SK-N-SH (cell line): ENCODE measurements at regions of chr1 and their contacts with region 1.

Region 1: GRCh38 chr1:245156081-245156735 is 1.4 kb downstream of the KIF26B start:
- DNase-seq: peak; percentile 93
- H3K4me3 ChIP-seq: peak overlapping the region; percentile 84 to 99
- H3K27ac ChIP-seq: peak overlapping the region; percentile 68 to 98; a peak in 3 of 4 replicates
- H3K4me1 ChIP-seq: peaks cover 0 to 41% of the 10 kb centered on the region in 2 experiments; a peak in 2 of 4 replicates
- H3K27me3 ChIP-seq: no peaks in the 10 kb centered on the region
- CTCF ChIP-seq: peak; percentile 63
- EP300 ChIP-seq: peak in 1 of 2 experiments; percentile 10; a peak in 1 of 4 replicates
- RAD21 ChIP-seq: peak; percentile 74

Region 2: DNA sequence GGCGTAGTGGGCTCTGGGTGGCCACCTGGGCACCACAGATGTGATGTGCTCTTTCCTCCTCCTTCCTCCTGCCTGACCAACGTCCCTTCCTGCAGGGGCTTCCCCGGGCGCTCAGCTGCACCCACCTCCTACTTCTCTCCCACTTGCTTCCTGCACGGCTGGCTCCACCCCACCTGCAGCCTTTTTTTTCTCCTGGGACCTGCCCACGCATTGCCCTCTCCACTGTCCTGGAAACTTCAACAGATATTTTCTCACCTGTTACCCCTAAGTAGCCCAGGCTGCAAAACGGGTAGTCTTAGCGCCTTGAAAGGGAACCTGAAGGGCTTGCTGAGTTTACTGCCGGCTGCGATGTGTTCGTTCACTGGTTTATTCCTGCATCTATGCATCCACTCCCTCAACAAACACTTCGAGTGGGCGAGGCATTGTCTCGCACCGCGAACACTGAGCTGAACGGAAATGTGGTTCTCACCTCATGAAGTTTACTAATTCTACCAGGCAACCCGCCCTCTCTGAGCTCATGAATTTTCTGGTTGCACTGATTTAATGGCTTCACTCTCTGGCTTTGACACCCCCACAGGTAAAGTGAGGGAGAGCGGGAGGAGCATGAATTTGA is 1081.5 kb before region 1 on chr1:
- CTCF ChIA-PET with region 1: no interaction called
- POLR2A ChIA-PET with region 1: no interaction called
- DNase-seq: no peak
- H3K4me3 ChIP-seq: no peak overlapping the region
- H3K27ac ChIP-seq: no peak overlapping the region
- H3K4me1 ChIP-seq: no peaks in the 10 kb centered on the region; a peak in 1 of 4 replicates
- H3K27me3 ChIP-seq: no peaks in the 10 kb centered on the region
- CTCF ChIP-seq: no peak
- EP300 ChIP-seq: no peak
- RAD21 ChIP-seq: no peak

Region 3: GRCh38 chr1:245166471-245166885 is 10.3 kb after region 1 on chr1:
- CTCF ChIA-PET with region 1: interaction called, 30 read pairs
- POLR2A ChIA-PET with region 1: interaction called, 10 read pairs
- DNase-seq: peak; percentile 78
- H3K4me3 ChIP-seq: peak overlapping the region; percentile 23 to 27
- H3K27ac ChIP-seq: peak overlapping the region; percentile 10 to 87
- H3K4me1 ChIP-seq: peaks cover 0 to 48% of the 10 kb centered on the region in 2 experiments; a peak in 2 of 4 replicates
- H3K27me3 ChIP-seq: no peaks in the 10 kb centered on the region
- CTCF ChIP-seq: 0 out of 2 replicates have a peak, but pooled peaks have one; percentile 9
- EP300 ChIP-seq: peak in 1 of 2 experiments; percentile 63; a peak in 1 of 4 replicates
- RAD21 ChIP-seq: no peak; the same call in 1 of the 2 replicates

Region 4: GRCh38 chr1:245337829-245338484 is 181.7 kb after region 1 on chr1:
- CTCF ChIA-PET with region 1: interaction called, 13 read pairs
- POLR2A ChIA-PET with region 1: interaction called, 3 read pairs
- DNase-seq: peak; percentile 64
- H3K4me3 ChIP-seq: no peak overlapping the region
- H3K27ac ChIP-seq: peak overlapping the region; percentile 9 to 92; a peak in 2 of 4 replicates
- H3K4me1 ChIP-seq: peaks cover 0 to 38% of the 10 kb centered on the region in 2 experiments; a peak in 2 of 4 replicates
- H3K27me3 ChIP-seq: no peaks in the 10 kb centered on the region
- CTCF ChIP-seq: no peak
- EP300 ChIP-seq: peak in 1 of 2 experiments; percentile 89; a peak in 2 of 4 replicates
- RAD21 ChIP-seq: no peak

Region 5: GRCh38 chr1:245512980-245513578 is 356.9 kb after region 1 on chr1:
- CTCF ChIA-PET with region 1: interaction called, 50 read pairs
- POLR2A ChIA-PET with region 1: interaction called, 25 read pairs
- DNase-seq: peak; percentile 78
- H3K4me3 ChIP-seq: peak overlapping the region; percentile 39 to 55
- H3K27ac ChIP-seq: peak overlapping the region; percentile 41 to 92; a peak in 3 of 4 replicates
- H3K4me1 ChIP-seq: peaks cover 0 to 51% of the 10 kb centered on the region in 2 experiments; a peak in 2 of 4 replicates
- H3K27me3 ChIP-seq: no peaks in the 10 kb centered on the region
- CTCF ChIP-seq: peak; percentile 45
- EP300 ChIP-seq: no peak
- RAD21 ChIP-seq: peak; percentile 26

Region 6: DNA sequence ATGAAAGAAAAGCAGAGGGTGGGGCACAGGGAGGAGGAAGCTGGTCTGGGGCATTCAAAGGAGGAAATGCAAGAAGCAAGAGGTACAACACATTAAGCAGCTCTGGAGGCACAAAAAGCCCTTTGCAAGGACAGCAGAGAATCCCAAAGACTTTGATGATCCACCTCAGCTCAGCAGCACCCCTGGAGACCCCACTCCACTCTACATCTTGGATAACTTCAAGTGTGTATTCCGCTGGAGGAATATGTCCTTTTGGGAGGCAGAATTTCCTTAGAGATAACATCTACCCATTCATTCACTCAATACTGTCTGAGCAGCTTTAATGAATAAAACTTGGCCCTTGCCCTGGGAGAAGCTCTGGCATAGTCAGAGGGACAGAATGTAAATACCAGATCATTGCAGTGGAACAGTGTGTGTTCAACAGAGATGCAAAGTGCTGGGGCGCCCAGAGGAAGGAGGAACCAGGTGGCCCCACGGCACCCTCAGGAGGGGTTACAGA is 598.3 kb after region 1 on chr1:
- CTCF ChIA-PET with region 1: interaction called, 13 read pairs
- POLR2A ChIA-PET with region 1: interaction called, 3 read pairs
- DNase-seq: no peak
- H3K4me3 ChIP-seq: no peak overlapping the region
- H3K27ac ChIP-seq: peak overlapping the region; percentile 25 to 97; a peak in 3 of 4 replicates
- H3K4me1 ChIP-seq: peaks cover 7 to 43% of the 10 kb centered on the region in 2 experiments; a peak in 3 of 4 replicates
- H3K27me3 ChIP-seq: no peaks in the 10 kb centered on the region
- CTCF ChIP-seq: no peak
- EP300 ChIP-seq: peak in 1 of 2 experiments; percentile 60; a peak in 2 of 4 replicates
- RAD21 ChIP-seq: no peak

Region 7: DNA sequence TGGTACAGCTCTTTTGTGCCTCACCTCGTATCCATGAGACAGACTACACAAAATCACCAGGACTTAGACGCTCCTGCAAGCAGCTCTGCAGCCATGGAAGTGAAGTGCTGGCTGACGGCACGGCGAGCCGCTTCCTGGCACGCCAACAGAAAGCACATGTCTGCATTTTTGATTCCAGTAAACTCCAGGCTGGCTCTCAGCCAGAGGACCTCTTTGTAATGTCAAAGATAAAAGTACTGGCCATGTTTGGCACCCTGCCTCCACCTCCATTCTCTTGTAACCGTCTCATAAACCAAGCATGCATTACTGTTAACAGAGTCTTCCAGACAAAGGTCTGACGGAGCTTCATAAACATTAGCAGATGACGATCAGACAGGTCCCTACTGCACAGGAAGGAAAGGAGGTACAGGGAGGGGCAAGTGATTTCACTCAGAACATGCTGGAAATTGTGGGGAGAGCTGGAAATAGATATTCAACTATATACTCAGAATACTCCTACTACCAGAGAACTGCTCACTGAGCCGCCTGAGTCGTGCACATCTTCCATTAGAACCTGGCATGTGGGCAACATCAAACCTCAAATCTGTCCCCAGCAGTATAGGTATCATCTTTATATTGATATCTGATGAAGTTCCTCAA is 718.9 kb after region 1 on chr1:
- CTCF ChIA-PET with region 1: interaction called, 10 read pairs
- POLR2A ChIA-PET with region 1: interaction called, 4 read pairs
- DNase-seq: peak; percentile 82
- H3K4me3 ChIP-seq: no peak overlapping the region
- H3K27ac ChIP-seq: peak overlapping the region; percentile 96 to 100
- H3K4me1 ChIP-seq: peaks cover 29 to 80% of the 10 kb centered on the region in 2 experiments
- H3K27me3 ChIP-seq: no peaks in the 10 kb centered on the region
- CTCF ChIP-seq: no peak
- EP300 ChIP-seq: peak; percentile 99 to 100
- RAD21 ChIP-seq: peak; percentile 54

Region 8: GRCh38 chr1:246280551-246280950 is 1124.3 kb after region 1 on chr1:
- CTCF ChIA-PET with region 1: interaction called, 40 read pairs
- POLR2A ChIA-PET with region 1: interaction called, 3 read pairs
- DNase-seq: peak; percentile 25
- H3K4me3 ChIP-seq: no peak overlapping the region
- H3K27ac ChIP-seq: peak overlapping the region in 1 of 2 experiments; percentile 58; a peak in 1 of 4 replicates
- H3K4me1 ChIP-seq: peaks cover 0 to 13% of the 10 kb centered on the region in 2 experiments; a peak in 2 of 4 replicates
- H3K27me3 ChIP-seq: no peaks in the 10 kb centered on the region
- CTCF ChIP-seq: peak; percentile 70
- EP300 ChIP-seq: no peak
- RAD21 ChIP-seq: peak; percentile 84